ENCODE measurements at regions of chr11 and their contacts with region 1.

Region 1: GRCh38 chr11:727859-728748 is 19.2 kb upstream of the TALDO1 start:
- DNase-seq: peak; percentile 92
- ATAC-seq: peak; percentile 83
- H3K4me3 Mint-ChIP-seq: no peak overlapping the region
- H3K27ac Mint-ChIP-seq: no peak overlapping the region
- H3K4me1 Mint-ChIP-seq: peaks cover 13% of the 10 kb centered on the region
- H3K27me3 Mint-ChIP-seq: peaks cover 8% of the 10 kb centered on the region
- CTCF ChIP-seq: peak; percentile 98

Region 2: GRCh38 chr11:554824-555472 is 173.2 kb before region 1 on chr11:
- CTCF ChIA-PET with region 1: interaction called, 73 read pairs
- POLR2A ChIA-PET with region 1: interaction called, 5 read pairs
- intact Hi-C with region 1: loop called (anchors 5 kb)
- DNase-seq: peak; percentile 79
- ATAC-seq: peak; percentile 86
- H3K4me3 Mint-ChIP-seq: peak overlapping the region; percentile 10
- H3K27ac Mint-ChIP-seq: no peak overlapping the region
- H3K4me1 Mint-ChIP-seq: peaks cover 5% of the 10 kb centered on the region
- H3K27me3 Mint-ChIP-seq: peaks cover 2% of the 10 kb centered on the region
- CTCF ChIP-seq: peak; percentile 49

Region 3: GRCh38 chr11:613369-614268 is 114.5 kb before region 1 on chr11:
- CTCF ChIA-PET with region 1: no interaction called
- POLR2A ChIA-PET with region 1: interaction called, 10 read pairs
- intact Hi-C with region 1: no loop called
- DNase-seq: peak; percentile 93
- ATAC-seq: peak; percentile 59
- H3K4me3 Mint-ChIP-seq: peak overlapping the region; percentile 84
- H3K27ac Mint-ChIP-seq: peak overlapping the region; percentile 79
- H3K4me1 Mint-ChIP-seq: peaks cover 11% of the 10 kb centered on the region
- H3K27me3 Mint-ChIP-seq: no peaks in the 10 kb centered on the region
- CTCF ChIP-seq: no peak

Region 4: GRCh38 chr11:662689-663274 is 65.3 kb before region 1 on chr11:
- CTCF ChIA-PET with region 1: interaction called, 8 read pairs
- POLR2A ChIA-PET with region 1: no interaction called
- intact Hi-C with region 1: loop called (anchors 2 kb)
- DNase-seq: peak; percentile 70
- ATAC-seq: peak; percentile 80
- H3K4me3 Mint-ChIP-seq: no peak overlapping the region
- H3K27ac Mint-ChIP-seq: no peak overlapping the region
- H3K4me1 Mint-ChIP-seq: no peaks in the 10 kb centered on the region
- H3K27me3 Mint-ChIP-seq: no peaks in the 10 kb centered on the region
- CTCF ChIP-seq: peak; percentile 83

Region 5: DNA sequence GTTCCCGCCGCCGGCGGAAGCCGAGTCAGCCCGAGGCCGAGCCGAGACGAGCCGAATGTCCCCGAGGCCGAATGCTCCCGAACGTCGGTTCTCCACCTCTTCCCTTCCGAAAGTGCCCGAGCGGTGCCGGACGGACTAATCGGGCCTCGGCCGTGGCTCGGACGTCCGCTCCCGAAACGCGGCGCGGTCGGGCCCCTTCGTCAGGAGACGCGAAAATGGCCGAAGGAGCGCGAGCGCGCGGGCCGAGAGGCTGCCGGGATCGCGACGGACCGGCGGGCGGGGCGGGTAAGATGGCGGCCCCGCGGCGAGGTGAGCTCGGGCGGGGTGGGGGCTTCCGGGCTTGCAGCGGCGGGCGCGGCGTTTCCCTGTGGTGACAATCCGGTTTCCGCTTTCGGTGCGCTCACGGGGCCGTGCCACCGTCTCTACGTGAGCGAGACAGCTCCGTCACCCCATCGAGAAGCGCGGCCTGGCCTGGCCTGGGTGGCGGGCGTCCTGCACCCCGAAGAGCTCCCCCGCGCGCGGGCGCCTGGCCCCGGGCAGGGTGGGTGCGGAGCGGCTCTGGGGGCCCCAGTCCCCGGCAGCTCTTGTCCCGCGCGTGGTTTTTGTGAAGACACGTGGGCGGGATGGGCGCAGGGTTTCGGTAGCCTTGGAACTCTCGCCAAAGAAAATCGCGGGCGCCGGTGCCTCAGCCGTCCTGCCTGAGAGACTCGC is 32.4 kb before region 1 on chr11 and contains the start of gene TMEM80:
- CTCF ChIA-PET with region 1: interaction called, 35 read pairs
- POLR2A ChIA-PET with region 1: interaction called, 7 read pairs
- intact Hi-C with region 1: no loop called
- DNase-seq: peak; percentile 99
- ATAC-seq: peak; percentile 79
- H3K4me3 Mint-ChIP-seq: peak within 1 kb of the TSS; percentile 88
- H3K27ac Mint-ChIP-seq: peak within 1 kb of the TSS; percentile 94
- H3K4me1 Mint-ChIP-seq: peaks cover 48% of the 10 kb centered on the region
- H3K27me3 Mint-ChIP-seq: no peaks in the 10 kb centered on the region
- CTCF ChIP-seq: no peak
- total RNA-seq, gene TMEM80: 10.6 to 12.5 TPM

Region 6: DNA sequence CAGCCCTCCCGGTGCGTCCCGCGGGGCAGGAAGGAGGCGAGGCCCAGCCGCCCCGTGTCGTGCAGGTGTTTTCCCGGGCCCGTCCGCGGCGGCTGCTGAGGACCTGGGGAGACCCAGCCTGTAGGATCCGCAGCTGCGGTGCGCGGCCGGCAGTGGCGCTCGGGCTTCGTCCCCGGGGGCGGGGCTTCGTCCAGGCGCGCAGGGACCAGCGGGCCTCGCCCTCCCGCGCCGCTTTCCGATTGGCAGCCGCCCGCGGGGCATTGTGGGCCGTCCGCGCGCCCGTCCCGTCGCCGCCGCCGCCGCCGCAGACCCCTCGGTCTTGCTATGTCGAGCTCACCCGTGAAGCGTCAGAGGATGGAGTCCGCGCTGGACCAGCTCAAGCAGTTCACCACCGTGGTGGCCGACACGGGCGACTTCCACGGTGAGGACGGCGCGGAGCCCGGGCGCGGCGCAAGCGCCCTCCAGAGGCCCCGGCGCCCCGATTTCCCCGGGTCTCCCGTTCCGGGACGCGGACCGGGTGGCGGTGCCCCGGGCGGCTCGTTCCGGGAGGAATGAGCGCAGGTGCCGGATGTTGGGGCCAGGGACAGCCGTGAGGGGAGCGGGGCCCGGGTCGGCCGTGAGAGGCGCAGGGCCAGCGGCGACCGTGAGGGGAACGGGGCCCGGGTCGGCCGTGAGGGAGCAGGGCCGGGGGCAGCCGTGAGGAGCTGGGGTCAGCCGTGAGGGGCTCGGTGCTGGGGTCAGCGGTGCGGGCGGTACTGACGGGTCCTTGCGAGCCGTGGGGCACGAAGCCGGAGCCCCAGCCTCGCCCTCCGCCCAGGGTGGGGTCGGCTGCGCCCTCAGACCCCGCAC is 19.3 kb after region 1 on chr11 and contains the start of gene TALDO1:
- CTCF ChIA-PET with region 1: interaction called, 24 read pairs
- POLR2A ChIA-PET with region 1: interaction called, 5 read pairs
- intact Hi-C with region 1: no loop called
- DNase-seq: peak; percentile 89
- ATAC-seq: peak; percentile 95
- H3K4me3 Mint-ChIP-seq: peak within 1 kb of the TSS; percentile 87
- H3K27ac Mint-ChIP-seq: peak within 1 kb of the TSS; percentile 77
- H3K4me1 Mint-ChIP-seq: peaks cover 14% of the 10 kb centered on the region
- H3K27me3 Mint-ChIP-seq: no peaks in the 10 kb centered on the region
- CTCF ChIP-seq: peak; percentile 11
- total RNA-seq, gene TALDO1: 234 to 241 TPM

Region 7: DNA sequence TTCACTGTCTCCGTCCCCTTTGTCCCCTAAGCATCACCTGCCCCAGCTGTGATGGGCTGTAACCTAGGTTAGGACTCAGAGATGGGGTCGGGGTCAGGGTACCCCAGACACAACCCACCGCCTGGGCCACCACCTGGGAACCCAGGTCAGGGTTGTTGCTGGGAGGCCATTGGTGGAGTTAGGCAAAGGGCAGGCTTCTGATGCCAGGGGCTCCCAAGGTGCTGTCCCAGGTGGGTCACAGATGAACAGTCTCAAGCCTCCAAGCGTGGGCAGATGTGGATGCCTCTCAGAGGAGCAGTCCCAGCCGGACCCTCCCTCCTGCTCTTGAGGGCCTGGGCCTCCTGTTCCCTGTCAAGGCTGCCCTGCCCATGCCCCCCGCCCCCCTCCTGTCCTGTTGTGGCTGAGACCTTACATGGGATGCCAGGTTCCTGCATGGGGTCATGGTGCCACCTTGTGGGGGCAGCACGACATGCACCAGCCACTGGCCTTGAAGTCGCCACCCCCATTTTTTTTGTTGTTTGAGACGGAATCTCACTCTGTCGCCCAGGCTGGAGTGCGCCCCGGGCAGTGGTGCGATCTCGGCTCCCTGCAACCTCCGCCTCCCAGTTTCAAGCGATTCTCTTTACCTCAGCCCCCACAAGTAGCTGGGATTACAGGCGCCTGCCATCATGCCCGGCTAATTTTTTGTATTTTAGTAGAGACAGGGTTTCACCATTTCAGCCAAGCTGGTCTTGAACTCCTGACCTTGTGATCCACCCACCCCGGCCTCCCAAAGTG is 37.1 kb after region 1 on chr11:
- CTCF ChIA-PET with region 1: interaction called, 10 read pairs
- POLR2A ChIA-PET with region 1: interaction called, 4 read pairs
- intact Hi-C with region 1: no loop called
- DNase-seq: peak; percentile 80
- ATAC-seq: peak; percentile 81
- H3K4me3 Mint-ChIP-seq: no peak overlapping the region
- H3K27ac Mint-ChIP-seq: no peak overlapping the region
- H3K4me1 Mint-ChIP-seq: peaks cover 9% of the 10 kb centered on the region
- H3K27me3 Mint-ChIP-seq: no peaks in the 10 kb centered on the region
- CTCF ChIP-seq: peak; percentile 68

Measured in activated CD8-positive, alpha-beta T cell treated with anti-CD3 and anti-CD28 coated beads for 36 hours (primary cell).